BJ (cell line): ENCODE measurements at regions of chr19 and their contacts with region 1.

Region 1: GRCh38 chr19:39554701-39555311 is 14.8 kb upstream of the EID2 start:
- DNase-seq: no peak
- H3K4me3 ChIP-seq: no peak overlapping the region
- H3K27me3 ChIP-seq: peaks cover 1% of the 10 kb centered on the region
- CTCF ChIP-seq: no peak

Region 2: GRCh38 chr19:39474139-39474622 is 80.6 kb before region 1 on chr19:
- CTCF ChIA-PET with region 1: no interaction called
- POLR2A ChIA-PET with region 1: no interaction called
- DNase-seq: no peak
- H3K4me3 ChIP-seq: no peak overlapping the region
- H3K27me3 ChIP-seq: no peaks in the 10 kb centered on the region
- CTCF ChIP-seq: peak; percentile 93

Region 3: GRCh38 chr19:39539519-39540332 is 15.1 kb before region 1 on chr19 and contains the start of gene EID2:
- CTCF ChIA-PET with region 1: interaction called, 28 read pairs
- POLR2A ChIA-PET with region 1: no interaction called
- DNase-seq: peak; percentile 62
- H3K4me3 ChIP-seq: peak within 1 kb of the TSS; percentile 87
- H3K27me3 ChIP-seq: no peaks in the 10 kb centered on the region
- CTCF ChIP-seq: peak; percentile 90
- polyA plus RNA-seq, gene EID2: 5.5 and 7.9 TPM in 2 replicates

Region 4: GRCh38 chr19:39671738-39672363 is 117.0 kb after region 1 on chr19:
- CTCF ChIA-PET with region 1: interaction called, 23 read pairs
- POLR2A ChIA-PET with region 1: no interaction called
- DNase-seq: no peak
- H3K4me3 ChIP-seq: no peak overlapping the region
- H3K27me3 ChIP-seq: peaks cover 3% of the 10 kb centered on the region; the same call in 1 of the 2 replicates
- CTCF ChIP-seq: peak; percentile 48